Vagina (tissue), 2 donors: ENCODE measurements at regions of chr13 and their contacts with region 1.

Region 1: DNA sequence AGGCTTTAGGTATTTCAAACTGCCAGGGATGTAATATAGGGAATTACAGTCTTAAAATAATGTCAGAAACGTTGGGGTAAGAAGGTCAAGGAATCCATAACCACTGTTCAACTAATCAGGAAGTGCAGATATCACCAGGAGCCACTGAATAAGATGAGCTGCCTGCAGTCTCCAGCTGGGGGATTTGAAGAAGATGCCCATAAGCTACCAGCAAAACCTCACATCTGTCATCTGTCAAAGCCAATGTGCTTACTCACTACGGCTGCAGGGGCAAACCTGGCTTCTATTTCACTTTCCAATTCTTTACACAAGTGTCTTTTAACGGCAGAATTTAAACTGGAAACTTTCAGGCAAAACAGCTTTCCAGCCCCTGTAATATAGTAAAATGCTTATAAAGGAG is 1410.1 kb upstream of the ATXN8OS start:
- DNase-seq: no peak
- H3K4me3 ChIP-seq: no peak overlapping the region
- H3K27ac ChIP-seq: no peak overlapping the region
- H3K4me1 ChIP-seq: no peaks in the 10 kb centered on the region
- H3K27me3 ChIP-seq: no peaks in the 10 kb centered on the region
- CTCF ChIP-seq: no peak
- POLR2A ChIP-seq: no peak

Region 2: DNA sequence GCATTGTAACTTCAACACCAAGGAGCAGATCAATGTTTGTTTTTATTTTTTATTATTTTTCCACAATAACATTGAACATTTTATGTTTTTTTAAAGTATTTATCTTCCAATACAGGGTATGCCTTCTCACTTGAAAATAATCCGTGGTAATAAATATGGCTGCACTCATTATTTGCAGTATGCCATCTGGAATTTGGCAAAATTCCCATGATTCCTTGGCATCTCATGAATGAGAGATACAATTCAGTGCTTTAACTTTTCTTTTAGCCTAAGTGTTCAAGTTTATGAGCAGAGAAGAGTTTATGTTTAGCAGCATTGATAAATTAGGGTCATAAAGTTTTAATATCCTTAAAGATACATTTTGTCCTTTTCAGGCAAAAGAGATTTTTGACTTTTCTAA is 300.5 kb after region 1 on chr13:
- intact Hi-C with region 1: no loop called
- DNase-seq: no peak
- H3K4me3 ChIP-seq: no peak overlapping the region
- H3K27ac ChIP-seq: no peak overlapping the region
- H3K4me1 ChIP-seq: no peaks in the 10 kb centered on the region
- H3K27me3 ChIP-seq: no peaks in the 10 kb centered on the region
- CTCF ChIP-seq: no peak
- POLR2A ChIP-seq: no peak

Region 3: DNA sequence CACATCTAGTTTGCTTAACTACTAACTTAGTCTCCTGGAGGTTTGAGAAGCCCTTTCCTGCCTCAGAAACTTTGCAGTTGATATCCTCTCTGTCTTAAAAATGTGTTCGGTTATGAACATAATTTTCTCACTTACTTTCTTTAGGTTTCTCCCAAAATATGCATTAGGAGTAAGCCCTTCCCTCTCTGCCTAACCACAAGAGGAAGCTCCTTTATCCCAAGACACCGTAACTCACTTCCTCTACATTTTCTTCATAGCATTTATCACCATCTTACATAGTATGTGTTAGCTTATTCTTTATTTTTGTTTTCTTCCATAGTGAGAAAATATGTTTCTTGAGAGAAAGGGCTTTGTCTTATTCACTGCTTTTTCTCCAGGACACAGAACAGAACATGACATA is 457.6 kb after region 1 on chr13:
- intact Hi-C with region 1: loop called (anchors 5 kb)
- DNase-seq: no peak
- H3K4me3 ChIP-seq: no peak overlapping the region
- H3K27ac ChIP-seq: no peak overlapping the region
- H3K4me1 ChIP-seq: no peaks in the 10 kb centered on the region
- H3K27me3 ChIP-seq: no peaks in the 10 kb centered on the region
- CTCF ChIP-seq: no peak
- POLR2A ChIP-seq: no peak